Cardiac septum (tissue), 1 donor: ENCODE measurements at regions of chr4 and their contacts with region 1.

Region 1: GRCh38 chr4:8468746-8469535 is 28.4 kb downstream of the TRMT44 start:
- DNase-seq: no peak

Region 2: GRCh38 chr4:8594097-8595038 is 125.4 kb after region 1 on chr4:
- intact Hi-C with region 1: loop called (anchors 1 kb)
- DNase-seq: no peak

Region 3: GRCh38 chr4:8917868-8918783 is 449.2 kb after region 1 on chr4:
- intact Hi-C with region 1: loop called (anchors 10 kb)
- DNase-seq: peak; percentile 78